ENCODE measurements at regions of chr17 and their contacts with region 1.

Region 1: DNA sequence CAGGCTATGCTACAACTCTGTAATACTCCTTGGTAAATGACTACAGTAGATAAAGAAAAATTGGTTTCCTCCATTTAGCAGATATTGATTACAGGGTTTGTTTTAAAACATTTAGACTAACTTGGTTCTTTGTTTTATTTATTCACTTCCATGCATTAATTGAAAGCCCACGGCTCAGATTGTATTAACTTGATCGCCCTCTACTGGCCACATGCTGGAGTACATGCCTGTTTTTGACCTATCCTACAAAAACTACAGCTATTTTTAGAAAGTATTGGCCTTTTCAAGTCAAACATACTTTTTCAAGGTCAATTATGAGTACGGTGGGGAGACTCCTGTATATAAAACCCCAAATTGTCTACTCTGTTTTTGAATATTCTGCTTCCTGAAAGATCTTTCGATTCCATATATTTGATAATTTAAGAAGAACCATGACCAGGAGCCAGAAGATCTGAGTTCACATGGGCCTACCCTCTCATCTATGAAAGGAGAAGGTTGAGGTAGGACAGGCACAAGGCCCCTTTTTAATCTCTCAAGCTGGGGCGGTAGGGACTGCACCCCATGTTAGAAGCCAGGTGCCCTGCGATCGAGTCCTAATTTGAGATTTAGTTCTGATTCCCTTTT is 51.8 kb downstream of the CA10 start:
- DNase-seq: peak; percentile 31
- ATAC-seq: no peak

Region 2: DNA sequence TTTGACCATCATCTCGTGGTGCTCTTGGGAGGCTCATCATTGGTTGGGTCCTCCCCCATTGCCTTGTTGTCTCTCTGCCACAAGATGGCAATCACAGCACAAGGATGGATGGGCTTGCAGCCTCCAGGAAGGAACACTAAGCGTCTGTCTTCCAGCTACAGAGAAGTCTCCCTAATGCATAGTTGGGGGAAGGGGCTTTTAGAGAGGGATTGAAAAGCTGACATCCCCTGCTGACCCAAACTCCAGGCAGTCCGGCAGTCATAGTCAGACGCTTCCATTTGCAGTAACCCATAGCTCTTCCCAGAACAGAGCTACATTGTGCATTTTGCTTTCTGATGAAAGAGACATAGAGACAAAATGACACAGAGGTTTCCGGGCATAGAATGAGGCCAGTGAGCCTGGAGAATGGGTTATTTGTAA is 735.0 kb before region 1 on chr17:
- intact Hi-C with region 1: loop called in 1 of 2 experiments (anchors 5 kb)
- DNase-seq: peak; percentile 37
- ATAC-seq: peak; percentile 50 to 89

Region 3: GRCh38 chr17:51572115-51572514 is 534.6 kb before region 1 on chr17:
- intact Hi-C with region 1: loop called in 1 of 2 experiments (anchors 10 kb)
- DNase-seq: no peak
- ATAC-seq: no peak

Region 4: DNA sequence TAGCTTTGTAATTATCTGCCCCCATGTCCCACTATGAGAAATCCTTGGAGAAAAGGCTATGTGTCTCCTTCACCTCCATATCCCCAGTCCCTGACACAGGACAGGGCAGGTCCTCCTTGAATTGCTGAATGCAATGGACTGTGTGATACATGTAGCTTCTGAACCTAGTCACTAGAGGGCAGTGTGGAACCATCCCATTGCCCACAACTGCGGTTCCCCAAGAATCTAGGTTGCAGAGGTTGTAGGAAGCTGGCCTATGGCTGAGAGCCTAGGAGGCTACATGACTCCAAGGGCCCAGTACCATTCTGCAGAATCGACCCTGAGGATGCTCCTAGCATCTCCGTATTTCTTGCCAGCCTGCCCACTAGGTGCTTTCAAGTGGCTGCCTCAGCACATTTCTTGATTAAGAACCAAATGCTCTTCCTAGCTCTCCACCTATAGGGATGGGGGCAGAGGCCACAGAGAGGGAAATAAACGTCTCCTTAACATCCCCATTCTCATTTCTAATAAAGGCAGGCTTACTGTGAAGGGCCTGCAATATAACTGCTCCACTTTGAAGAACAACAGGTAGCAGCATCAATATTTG is 342.3 kb before region 1 on chr17:
- intact Hi-C with region 1: loop called in 1 of 2 experiments (anchors 5 kb)
- DNase-seq: peak; percentile 24
- ATAC-seq: peak; percentile 53 to 83

Region 5: DNA sequence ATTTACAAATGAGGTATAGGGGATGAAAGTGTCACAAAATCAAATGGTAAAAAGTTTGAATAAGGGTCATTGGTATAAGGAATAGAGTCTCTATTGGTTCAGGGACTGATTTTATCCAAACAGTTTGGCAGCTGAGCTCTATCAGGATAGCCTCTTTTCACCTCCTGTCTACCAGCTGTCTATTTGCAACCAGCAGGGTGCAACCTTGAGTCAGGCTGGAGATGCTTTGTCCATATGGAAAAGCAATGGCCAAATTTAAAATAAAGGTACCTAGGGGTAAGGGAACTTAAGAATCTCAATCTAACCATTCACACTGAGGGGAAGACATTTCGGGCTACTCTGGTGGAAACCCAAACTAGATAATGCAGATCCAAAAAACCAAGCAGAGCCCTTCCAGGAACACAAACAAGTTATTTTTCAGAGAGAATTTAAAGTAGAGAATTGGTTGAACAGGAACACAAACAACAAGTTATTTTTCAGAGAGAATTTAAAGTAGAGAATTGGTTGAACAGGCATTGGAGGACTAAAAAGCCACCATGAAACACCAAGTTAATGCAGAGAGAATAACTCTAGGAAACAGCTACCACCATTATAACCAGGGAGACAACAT is 64.3 kb after region 1 on chr17:
- intact Hi-C with region 1: no loop called
- DNase-seq: no peak
- ATAC-seq: no peak

Region 6: GRCh38 chr17:52242268-52242667 is 135.5 kb after region 1 on chr17:
- intact Hi-C with region 1: no loop called
- DNase-seq: no peak
- ATAC-seq: no peak

Measured in left cardiac atrium (tissue), 4 donors.